ENCODE measurements at regions of chr21 and their contacts with region 1.

Region 1: DNA sequence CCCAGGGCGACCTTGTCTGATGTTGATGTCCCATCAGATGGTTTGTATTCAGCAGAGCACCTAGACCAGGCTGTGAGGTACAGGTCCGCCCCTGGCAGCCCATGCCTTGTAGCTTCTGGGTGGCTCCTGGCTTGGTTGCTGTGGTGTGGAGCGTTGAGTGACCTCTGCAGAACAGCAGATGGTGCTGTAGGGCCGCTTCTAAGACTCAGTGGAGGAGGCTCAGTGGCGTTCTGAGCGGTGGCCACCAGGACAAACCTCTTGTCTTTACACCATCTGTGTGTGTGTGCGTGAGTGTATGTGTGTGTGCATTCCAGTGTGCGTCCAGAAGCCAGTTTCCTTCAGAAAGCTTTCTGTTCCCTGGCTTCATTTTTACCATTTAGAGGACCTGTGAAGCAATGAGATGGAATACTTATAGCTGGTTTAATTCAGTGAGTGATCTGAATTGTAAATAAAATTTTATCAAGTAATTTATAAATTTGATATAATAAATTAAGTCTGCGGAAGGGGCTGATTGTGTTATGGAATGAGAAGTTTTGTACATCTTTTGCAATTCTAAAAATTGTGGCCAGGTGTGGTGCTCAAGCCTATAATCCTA is 66.1 kb downstream of the ADARB1 start:
- DNase-seq: peak; percentile 88
- ATAC-seq: peak; percentile 83
- H3K4me3 ChIP-seq: no peak overlapping the region
- H3K27ac ChIP-seq: no peak overlapping the region
- H3K4me1 ChIP-seq: peaks cover 0 to 2% of the 10 kb centered on the region in 2 donors
- H3K27me3 ChIP-seq: no peaks in the 10 kb centered on the region

Region 2: DNA sequence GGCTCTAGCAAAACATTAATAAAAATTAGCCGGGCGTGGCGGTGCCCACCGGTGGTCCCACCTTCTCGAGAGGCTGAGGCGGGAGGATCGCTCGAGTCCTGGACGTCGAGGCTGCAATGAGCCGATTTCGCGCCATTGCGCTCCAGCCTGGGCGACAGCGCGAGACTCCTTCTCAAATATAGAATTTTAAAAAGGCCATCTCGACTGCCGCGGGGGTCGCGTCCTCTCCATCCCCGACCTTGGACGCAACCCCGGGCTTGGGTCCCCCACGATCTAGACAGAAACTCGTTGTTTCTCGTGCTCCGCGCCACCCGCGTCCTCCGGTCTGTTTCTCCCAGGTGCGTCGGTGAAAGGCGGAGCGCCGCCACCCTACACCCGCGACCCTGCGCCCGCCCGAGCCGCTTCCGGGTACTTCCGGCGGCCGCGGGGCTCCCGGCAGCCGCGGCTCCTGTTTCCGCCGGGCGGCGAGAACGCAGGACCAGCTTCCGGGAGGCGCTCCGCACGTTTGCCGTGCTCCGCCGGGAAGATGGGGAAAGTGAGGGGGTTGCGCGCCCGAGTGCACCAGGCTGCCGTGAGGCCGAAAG is 200.8 kb before region 1 on chr21 and contains the start of gene SLX9:
- intact Hi-C with region 1: no loop called
- DNase-seq: peak; percentile 86 to 92
- ATAC-seq: peak; percentile 87
- H3K4me3 ChIP-seq: peak within 1 kb of the TSS; percentile 86 to 95
- H3K27ac ChIP-seq: no peak within 1 kb of the TSS
- H3K4me1 ChIP-seq: no peaks in the 10 kb centered on the region
- H3K27me3 ChIP-seq: no peaks in the 10 kb centered on the region
- total RNA-seq, gene SLX9: 21.5 to 29.6 TPM

Region 3: DNA sequence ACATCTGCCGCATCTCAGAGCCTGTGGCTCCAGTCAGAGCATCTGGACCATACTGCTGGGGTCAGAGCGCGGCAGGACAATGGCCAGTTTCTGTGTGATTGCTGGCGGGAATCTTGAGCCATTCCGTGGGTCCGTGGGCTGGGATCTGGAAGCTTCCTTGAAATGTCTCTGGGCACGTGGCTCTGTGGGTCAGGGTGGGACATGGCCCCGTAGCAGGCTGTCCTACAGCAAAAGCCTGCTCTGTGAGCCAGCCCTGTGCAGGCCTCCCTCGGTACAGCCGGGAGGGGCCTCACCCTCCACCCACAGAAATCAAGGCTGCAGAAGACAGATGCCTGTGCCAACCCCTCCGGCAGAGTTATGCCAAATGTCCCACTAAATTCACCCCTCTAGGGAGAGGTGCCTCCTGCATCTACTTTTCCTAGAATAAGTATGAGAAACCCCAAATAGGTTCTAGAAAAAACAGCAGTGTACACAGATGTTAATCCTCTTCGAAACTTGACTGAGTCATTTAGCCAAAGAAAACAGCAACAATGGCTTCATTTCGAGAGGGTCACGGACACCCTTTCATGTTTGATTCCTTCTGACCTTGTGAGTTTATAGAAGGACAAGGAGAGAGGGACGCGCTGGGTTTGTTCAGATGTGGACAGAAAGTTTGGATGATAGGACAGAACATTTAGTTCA is 292.3 kb after region 1 on chr21:
- intact Hi-C with region 1: loop called (anchors 5 to 10 kb)
- DNase-seq: no peak
- ATAC-seq: peak; percentile 47
- H3K4me3 ChIP-seq: no peak overlapping the region
- H3K27ac ChIP-seq: peak overlapping the region in 1 of 2 donors; percentile 50
- H3K4me1 ChIP-seq: no peaks in the 10 kb centered on the region
- H3K27me3 ChIP-seq: no peaks in the 10 kb centered on the region

Region 4: GRCh38 chr21:45439161-45439872 is 298.9 kb after region 1 on chr21:
- intact Hi-C with region 1: loop called (anchors 5 to 10 kb)
- DNase-seq: peak; percentile 90 to 96
- ATAC-seq: peak; percentile 95
- H3K4me3 ChIP-seq: no peak overlapping the region
- H3K27ac ChIP-seq: peak overlapping the region; percentile 32 to 72
- H3K4me1 ChIP-seq: no peaks in the 10 kb centered on the region
- H3K27me3 ChIP-seq: no peaks in the 10 kb centered on the region